Motor neuron (in vitro differentiated cells): ENCODE measurements at regions of chr5 and their contacts with region 1.

Region 1: GRCh38 chr5:31825518-31826068 is 186.7 kb downstream of the PDZD2 start:
- ATAC-seq: peak in 6 of 8 experiments; percentile 40 to 97 (median 82)
- H3K4me3 ChIP-seq: no peak overlapping the region
- H3K27ac ChIP-seq: no peak overlapping the region
- H3K4me1 ChIP-seq: no peaks in the 10 kb centered on the region

Region 2: DNA sequence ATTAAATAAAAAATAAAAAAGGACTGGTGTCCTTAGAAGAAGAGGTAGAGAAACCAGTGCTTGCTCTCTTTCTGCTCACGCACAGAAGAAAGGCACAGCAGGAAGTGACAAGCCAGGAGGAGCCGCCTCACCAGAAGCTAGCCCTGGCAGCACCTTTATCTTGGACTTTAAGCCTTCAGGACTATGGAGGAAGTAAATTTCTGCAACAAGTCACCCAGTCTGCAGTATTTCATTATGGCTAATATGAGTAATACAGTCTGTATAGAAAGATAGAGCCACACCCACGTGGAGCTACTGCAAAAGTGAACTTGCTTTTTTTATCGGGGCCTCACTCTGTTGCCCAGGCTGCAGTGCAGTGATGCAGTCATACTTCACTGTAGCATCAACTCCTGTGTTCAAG is 118.3 kb before region 1 on chr5:
- in situ Hi-C with region 1: no loop called
- ATAC-seq: no peak
- H3K4me3 ChIP-seq: no peak overlapping the region
- H3K27ac ChIP-seq: no peak overlapping the region
- H3K4me1 ChIP-seq: no peaks in the 10 kb centered on the region

Region 3: GRCh38 chr5:32057162-32058096 is 231.8 kb after region 1 on chr5:
- in situ Hi-C with region 1: loop called in 1 of 9 experiments (anchors 25 kb)
- ATAC-seq: peak in 2 of 8 experiments; percentile 20 to 23
- H3K4me3 ChIP-seq: no peak overlapping the region
- H3K27ac ChIP-seq: no peak overlapping the region
- H3K4me1 ChIP-seq: no peaks in the 10 kb centered on the region

Region 4: GRCh38 chr5:32076699-32077695 is 251.4 kb after region 1 on chr5:
- in situ Hi-C with region 1: loop called in 5 of 9 experiments (anchors 10 to 25 kb)
- ATAC-seq: peak in 4 of 8 experiments; percentile 22 to 52 (median 44)
- H3K4me3 ChIP-seq: no peak overlapping the region
- H3K27ac ChIP-seq: no peak overlapping the region
- H3K4me1 ChIP-seq: no peaks in the 10 kb centered on the region